PC-3 (cell line): ENCODE measurements at regions of chr9 and their contacts with region 1.

Region 1: GRCh38 chr9:15306757-15307534 is at the start of gene TTC39B:
- DNase-seq: peak; percentile 88
- ATAC-seq: peak; percentile 90
- H3K4me3 ChIP-seq: peak within 1 kb of the TSS; percentile 91
- H3K27ac ChIP-seq: no peak within 1 kb of the TSS
- H3K4me1 ChIP-seq: peaks cover 20% of the 10 kb centered on the region
- H3K27me3 ChIP-seq: no peaks in the 10 kb centered on the region
- CTCF ChIP-seq: no peak
- total RNA-seq, gene TTC39B: 1.5 and 2.0 TPM in 2 replicates

Region 2: DNA sequence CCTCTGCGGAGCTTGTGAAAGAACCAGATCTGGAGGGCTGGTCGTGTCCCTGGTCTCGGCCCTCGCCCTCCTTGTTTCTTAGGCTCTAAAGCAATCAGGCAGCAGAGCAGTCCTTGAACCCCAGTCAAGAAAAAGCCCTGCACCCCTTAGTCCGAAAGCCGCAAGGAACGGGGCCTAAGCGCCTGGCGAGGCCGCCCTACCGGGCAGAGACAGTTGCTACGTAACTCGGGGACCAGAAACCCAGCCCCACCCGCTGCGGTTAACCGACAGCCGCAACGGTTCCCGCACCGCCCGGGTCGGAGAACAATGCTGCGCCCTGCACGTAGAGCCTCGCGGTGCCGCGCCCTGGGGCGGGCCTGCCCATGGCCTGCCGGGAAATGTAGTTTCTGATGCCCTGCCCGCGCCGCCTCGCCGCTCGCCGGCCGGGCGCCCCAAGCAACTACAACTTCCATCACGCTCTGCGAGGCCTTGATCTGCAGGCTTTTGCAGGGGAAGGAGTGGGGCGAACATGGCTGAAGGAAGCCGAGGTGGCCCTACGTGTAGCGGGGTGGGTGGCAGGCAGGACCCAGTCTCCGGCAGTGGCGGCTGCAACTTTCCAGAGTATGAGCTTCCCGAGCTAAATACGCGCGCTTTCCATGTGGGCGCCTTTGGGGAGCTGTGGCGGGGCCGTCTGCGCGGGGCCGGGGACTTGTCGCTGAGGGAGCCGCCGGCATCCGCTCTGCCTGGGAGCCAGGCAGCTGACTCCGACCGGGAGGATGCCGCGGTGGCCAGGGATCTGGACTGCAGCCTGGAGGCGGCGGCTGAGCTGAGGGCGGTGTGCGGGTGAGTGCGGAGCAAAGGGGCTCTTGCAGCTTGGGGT is 115.7 kb after region 1 on chr9 and contains the start of gene SNAPC3:
- CTCF ChIA-PET with region 1: no interaction called
- POLR2A ChIA-PET with region 1: no interaction called
- intact Hi-C with region 1: loop called (anchors 2 kb)
- DNase-seq: peak; percentile 90
- ATAC-seq: peak; percentile 97
- H3K4me3 ChIP-seq: peak within 1 kb of the TSS; percentile 94
- H3K27ac ChIP-seq: peak within 1 kb of the TSS; percentile 48
- H3K4me1 ChIP-seq: peaks cover 16% of the 10 kb centered on the region
- H3K27me3 ChIP-seq: no peaks in the 10 kb centered on the region
- CTCF ChIP-seq: no peak
- total RNA-seq, gene SNAPC3: 25.4 and 34.2 TPM in 2 replicates